Activated CD4-positive, alpha-beta T cell treated with anti-CD3 and anti-CD28 coated beads, Interleukin-2, amount 10 ng/mL, durations not matched to agents 24 days and 14 days (primary cell): ENCODE measurements at regions of chr1 and their contacts with region 1.

Region 1: DNA sequence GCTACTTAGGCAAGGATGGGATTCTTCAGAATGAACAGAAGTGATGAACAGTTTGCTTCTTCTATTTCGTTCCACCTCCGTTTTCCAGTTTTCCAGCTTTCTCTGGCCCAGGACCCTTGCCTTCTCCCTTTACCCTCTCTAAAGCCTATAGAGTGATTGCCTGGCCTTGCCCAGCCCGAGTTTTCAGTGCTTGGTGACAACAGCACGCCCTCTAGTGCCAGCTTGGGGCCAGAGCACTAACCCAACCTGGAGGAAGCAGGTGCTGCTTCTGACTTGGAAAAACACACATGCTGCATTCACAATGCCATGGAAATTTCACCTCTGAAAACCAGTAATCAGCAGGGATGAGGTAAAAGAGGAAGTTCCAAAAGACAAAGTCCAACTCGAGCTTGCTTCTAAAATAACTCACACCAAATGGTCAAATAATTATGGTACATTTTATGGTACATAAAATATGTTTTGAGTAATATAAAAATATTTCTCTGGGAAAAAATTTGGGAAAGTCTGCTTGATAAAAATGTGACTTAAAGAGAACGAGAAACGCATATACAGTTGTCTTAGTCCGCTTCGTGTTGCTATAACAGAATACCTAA is 26.1 kb downstream of the UBE2T start:
- DNase-seq: peak; percentile 92
- H3K4me3 Mint-ChIP-seq: no peak overlapping the region
- H3K27ac Mint-ChIP-seq: no peak overlapping the region
- H3K4me1 Mint-ChIP-seq: peaks cover 7% of the 10 kb centered on the region
- H3K27me3 Mint-ChIP-seq: peaks cover 24% of the 10 kb centered on the region

Region 2: DNA sequence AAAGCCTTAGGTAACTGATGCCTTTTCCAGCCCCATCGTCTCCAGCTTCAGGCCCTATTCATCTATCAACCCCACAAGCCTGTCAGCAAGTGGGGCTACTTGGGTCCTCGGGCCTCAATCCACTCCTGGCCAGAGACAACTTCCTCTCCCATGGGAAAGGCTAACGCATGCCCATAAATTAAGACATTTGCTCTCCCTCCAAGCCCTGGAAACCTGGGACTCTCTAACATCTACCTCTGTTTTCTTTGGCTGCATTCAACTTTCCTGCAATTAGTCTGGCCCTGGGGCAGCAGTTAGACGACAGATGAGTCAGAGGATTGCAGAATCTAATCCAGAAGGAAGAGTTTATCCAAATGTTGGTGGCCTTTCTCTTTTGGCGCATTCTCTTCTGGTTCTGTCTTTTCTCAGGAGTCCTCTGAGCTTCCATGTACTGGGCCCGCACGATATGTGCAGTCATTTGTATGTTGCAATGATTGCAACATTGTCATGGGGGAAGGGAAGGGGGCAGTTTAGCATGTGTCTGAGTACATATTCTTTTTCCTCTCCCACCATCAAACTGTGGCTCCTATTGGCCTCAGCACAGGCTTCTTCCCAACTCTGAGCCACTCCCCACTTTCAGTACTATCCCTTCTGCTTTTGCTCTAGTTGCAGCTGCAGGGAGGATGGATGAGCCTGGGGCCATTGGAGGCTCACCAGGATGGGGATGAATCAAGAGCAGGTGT is 722.3 kb before region 1 on chr1:
- intact Hi-C with region 1: no loop called
- DNase-seq: no peak
- H3K4me3 Mint-ChIP-seq: no peak overlapping the region
- H3K27ac Mint-ChIP-seq: no peak overlapping the region
- H3K4me1 Mint-ChIP-seq: no peaks in the 10 kb centered on the region
- H3K27me3 Mint-ChIP-seq: no peaks in the 10 kb centered on the region

Region 3: GRCh38 chr1:202274611-202275010 is 41.1 kb before region 1 on chr1:
- intact Hi-C with region 1: loop called (anchors 1 kb)
- DNase-seq: peak; percentile 83
- H3K4me3 Mint-ChIP-seq: no peak overlapping the region
- H3K27ac Mint-ChIP-seq: no peak overlapping the region
- H3K4me1 Mint-ChIP-seq: peaks cover 3% of the 10 kb centered on the region
- H3K27me3 Mint-ChIP-seq: peaks cover 18% of the 10 kb centered on the region

Region 4: DNA sequence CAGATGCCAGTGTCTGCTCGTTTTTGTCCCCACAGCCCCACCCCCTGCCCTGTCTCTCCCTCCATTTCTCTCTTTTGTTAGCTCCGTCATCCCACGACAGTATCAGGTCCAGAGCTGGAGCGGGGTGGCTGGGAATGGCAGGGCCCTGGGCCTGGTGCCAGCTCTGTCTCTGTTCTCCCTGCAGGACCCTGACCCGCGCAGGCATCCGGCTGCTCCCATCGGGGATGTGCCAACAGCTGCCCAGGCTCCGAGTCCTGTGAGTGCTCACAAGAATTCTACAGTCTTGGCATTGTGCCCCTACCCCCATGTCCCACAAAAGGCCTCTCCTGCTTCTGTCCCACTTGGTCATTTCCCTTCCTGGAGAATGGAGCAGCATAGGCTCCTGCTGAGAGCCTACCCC is 11.3 kb before region 1 on chr1:
- intact Hi-C with region 1: no loop called
- DNase-seq: no peak
- H3K4me3 Mint-ChIP-seq: no peak overlapping the region
- H3K27ac Mint-ChIP-seq: no peak overlapping the region
- H3K4me1 Mint-ChIP-seq: peaks cover 2% of the 10 kb centered on the region
- H3K27me3 Mint-ChIP-seq: peaks cover 2% of the 10 kb centered on the region